Left ventricle myocardium inferior (tissue), 1 donor: ENCODE measurements at regions of chr4 and their contacts with region 1.

Region 1: GRCh38 chr4:174365018-174365587 is 81.4 kb downstream of the CEP44 start:
- DNase-seq: no peak
- H3K4me3 ChIP-seq: no peak overlapping the region
- H3K27ac ChIP-seq: no peak overlapping the region
- H3K4me1 ChIP-seq: no peaks in the 10 kb centered on the region
- H3K27me3 ChIP-seq: no peaks in the 10 kb centered on the region
- CTCF ChIP-seq: peak; percentile 56

Region 2: DNA sequence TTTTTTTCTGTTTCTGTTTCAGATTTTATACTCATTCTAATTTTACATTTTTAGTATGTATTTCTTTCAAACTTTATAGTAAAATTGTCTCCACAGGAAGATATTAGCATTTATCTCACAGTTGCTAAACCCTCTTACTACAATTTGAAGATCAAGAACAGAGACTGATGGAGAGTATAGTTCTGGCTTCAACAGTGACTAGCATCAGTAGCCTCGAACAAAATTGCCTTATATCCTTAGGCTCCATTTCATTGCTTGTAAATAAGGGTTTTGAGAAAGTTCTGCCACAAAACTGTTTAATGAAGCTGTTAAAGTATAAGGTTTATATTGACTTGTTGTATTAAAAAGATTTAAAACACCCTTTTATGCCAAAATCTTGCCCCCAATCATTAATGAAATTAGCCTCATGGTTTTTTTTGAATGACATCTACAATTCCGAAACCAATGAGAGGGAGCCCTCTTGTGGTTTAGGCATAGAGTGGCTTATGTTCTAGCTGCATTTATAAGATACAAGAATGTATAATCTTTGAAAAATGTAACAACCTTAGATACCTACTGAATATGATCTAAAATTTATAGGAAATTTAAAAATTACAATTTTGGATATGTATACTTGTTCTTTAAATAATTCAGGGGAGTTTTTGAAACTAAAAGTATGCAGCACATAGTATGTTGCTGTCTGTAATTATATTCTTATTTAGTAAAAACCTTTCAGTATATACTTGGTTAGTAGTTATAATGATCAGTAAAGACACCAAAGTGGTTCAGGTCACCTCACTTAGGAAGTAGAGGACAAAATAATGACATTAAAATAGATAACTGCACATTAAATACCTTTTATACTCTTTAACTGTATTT is 267.0 kb after region 1 on chr4:
- intact Hi-C with region 1: loop called (anchors 5 kb)
- DNase-seq: no peak
- H3K4me3 ChIP-seq: no peak overlapping the region
- H3K27ac ChIP-seq: no peak overlapping the region
- H3K4me1 ChIP-seq: no peaks in the 10 kb centered on the region
- H3K27me3 ChIP-seq: no peaks in the 10 kb centered on the region
- CTCF ChIP-seq: peak; percentile 75

Region 3: GRCh38 chr4:174714393-174715211 is 349.5 kb after region 1 on chr4:
- intact Hi-C with region 1: loop called (anchors 10 kb)
- DNase-seq: no peak
- H3K4me3 ChIP-seq: no peak overlapping the region
- H3K27ac ChIP-seq: no peak overlapping the region
- H3K4me1 ChIP-seq: no peaks in the 10 kb centered on the region
- H3K27me3 ChIP-seq: no peaks in the 10 kb centered on the region
- CTCF ChIP-seq: peak; percentile 71